A673 (cell line): ENCODE measurements at regions of chr2 and their contacts with region 1.

Region 1: DNA sequence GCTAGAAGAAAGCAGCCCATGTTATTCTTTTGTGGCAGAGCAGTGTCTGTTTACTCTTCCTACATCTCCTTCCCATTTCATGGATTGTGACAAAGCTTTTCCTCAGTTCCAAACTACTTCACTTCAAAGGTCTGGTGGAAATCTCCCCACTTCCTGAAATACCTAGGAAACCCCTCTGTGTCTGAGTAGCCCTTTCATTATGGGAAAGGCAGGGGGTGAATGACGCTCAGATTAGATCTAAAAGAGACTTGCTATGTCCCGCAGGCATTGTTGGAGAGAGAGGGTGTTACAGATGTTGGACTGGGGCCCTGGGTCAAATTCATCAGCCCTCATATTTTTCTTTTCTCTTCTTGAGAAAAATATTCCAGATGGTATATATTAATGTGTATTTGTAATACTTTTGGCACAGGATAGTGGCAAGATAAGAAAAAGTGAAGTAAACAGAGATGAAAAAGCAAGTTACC is 675.0 kb downstream of the IRS1 start:
- DNase-seq: no peak
- H3K4me3 ChIP-seq: no peak overlapping the region
- H3K27ac ChIP-seq: no peak overlapping the region
- H3K4me1 ChIP-seq: peaks cover 54% of the 10 kb centered on the region
- H3K27me3 ChIP-seq: no peaks in the 10 kb centered on the region
- CTCF ChIP-seq: no peak

Region 2: GRCh38 chr2:226431288-226431948 is 306.8 kb after region 1 on chr2:
- CTCF ChIA-PET with region 1: no interaction called
- POLR2A ChIA-PET with region 1: no interaction called
- intact Hi-C with region 1: loop called (anchors 10 kb)
- DNase-seq: peak; percentile 97
- H3K4me3 ChIP-seq: no peak overlapping the region
- H3K27ac ChIP-seq: peak overlapping the region; percentile 65
- H3K4me1 ChIP-seq: peaks cover 37% of the 10 kb centered on the region
- H3K27me3 ChIP-seq: no peaks in the 10 kb centered on the region
- CTCF ChIP-seq: no peak

Region 3: DNA sequence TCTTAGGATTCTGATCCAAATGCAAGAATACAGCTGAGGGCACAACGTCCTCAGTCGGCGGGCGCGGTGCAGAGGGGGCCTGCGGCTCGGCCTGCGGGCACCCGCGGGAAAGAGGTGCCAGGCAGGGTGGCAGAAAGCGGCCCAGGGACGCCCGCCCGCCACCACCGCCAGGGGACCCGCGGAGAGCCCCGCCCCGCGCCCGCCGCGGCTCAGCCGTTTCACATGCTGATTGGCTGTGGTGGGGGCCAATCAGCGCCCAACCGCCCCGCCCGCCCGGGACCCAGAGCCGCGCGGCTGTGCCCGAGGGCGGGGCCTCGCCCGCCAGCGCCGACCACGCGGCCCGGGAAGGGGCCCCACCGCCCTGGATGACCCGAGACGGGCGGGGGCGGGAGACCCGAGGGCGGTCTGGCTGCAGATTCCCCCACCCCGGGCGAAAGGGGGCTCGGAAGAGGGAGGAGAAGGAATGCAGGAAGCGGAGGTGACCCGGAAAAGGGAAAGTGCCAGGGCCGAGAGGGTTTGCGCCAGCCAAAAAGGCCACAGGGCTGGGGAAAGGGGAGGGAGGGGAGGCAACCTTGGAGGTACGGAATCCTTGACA is 667.0 kb after region 1 on chr2:
- CTCF ChIA-PET with region 1: no interaction called
- POLR2A ChIA-PET with region 1: no interaction called
- intact Hi-C with region 1: loop called (anchors 2 kb)
- DNase-seq: peak; percentile 93
- H3K4me3 ChIP-seq: peak overlapping the region; percentile 91
- H3K27ac ChIP-seq: peak overlapping the region; percentile 89
- H3K4me1 ChIP-seq: peaks cover 56% of the 10 kb centered on the region
- H3K27me3 ChIP-seq: no peaks in the 10 kb centered on the region
- CTCF ChIP-seq: peak; percentile 23; the same call in 1 of the 2 replicates